ENCODE measurements at regions of chr9 and their contacts with region 1.

Region 1: GRCh38 chr9:93302551-93303257 is 118.8 kb downstream of the WNK2 start:
- DNase-seq: peak; percentile 61
- H3K4me3 Mint-ChIP-seq: no peak overlapping the region
- H3K27ac Mint-ChIP-seq: no peak overlapping the region
- H3K4me1 Mint-ChIP-seq: peaks cover 9% of the 10 kb centered on the region
- H3K27me3 Mint-ChIP-seq: peaks cover 2% of the 10 kb centered on the region

Region 2: GRCh38 chr9:92954049-92954861 is 348.4 kb before region 1 on chr9:
- CTCF ChIA-PET with region 1: interaction called, 11 read pairs
- POLR2A ChIA-PET with region 1: no interaction called
- DNase-seq: peak; percentile 88
- H3K4me3 Mint-ChIP-seq: peak overlapping the region; percentile 63
- H3K27ac Mint-ChIP-seq: peak overlapping the region; percentile 91
- H3K4me1 Mint-ChIP-seq: peaks cover 71% of the 10 kb centered on the region
- H3K27me3 Mint-ChIP-seq: no peaks in the 10 kb centered on the region

Region 3: GRCh38 chr9:93159601-93160471 is 142.9 kb before region 1 on chr9:
- CTCF ChIA-PET with region 1: interaction called, 10 read pairs
- POLR2A ChIA-PET with region 1: no interaction called
- DNase-seq: peak; percentile 74
- H3K4me3 Mint-ChIP-seq: no peak overlapping the region
- H3K27ac Mint-ChIP-seq: no peak overlapping the region
- H3K4me1 Mint-ChIP-seq: peaks cover 29% of the 10 kb centered on the region
- H3K27me3 Mint-ChIP-seq: no peaks in the 10 kb centered on the region

Region 4: GRCh38 chr9:93357649-93358048 is 54.9 kb after region 1 on chr9:
- CTCF ChIA-PET with region 1: no interaction called
- POLR2A ChIA-PET with region 1: no interaction called
- DNase-seq: peak; percentile 24
- H3K4me3 Mint-ChIP-seq: no peak overlapping the region
- H3K27ac Mint-ChIP-seq: no peak overlapping the region
- H3K4me1 Mint-ChIP-seq: peaks cover 12% of the 10 kb centered on the region
- H3K27me3 Mint-ChIP-seq: peaks cover 1% of the 10 kb centered on the region